ENCODE measurements at regions of chr11 and their contacts with region 1.

Region 1: DNA sequence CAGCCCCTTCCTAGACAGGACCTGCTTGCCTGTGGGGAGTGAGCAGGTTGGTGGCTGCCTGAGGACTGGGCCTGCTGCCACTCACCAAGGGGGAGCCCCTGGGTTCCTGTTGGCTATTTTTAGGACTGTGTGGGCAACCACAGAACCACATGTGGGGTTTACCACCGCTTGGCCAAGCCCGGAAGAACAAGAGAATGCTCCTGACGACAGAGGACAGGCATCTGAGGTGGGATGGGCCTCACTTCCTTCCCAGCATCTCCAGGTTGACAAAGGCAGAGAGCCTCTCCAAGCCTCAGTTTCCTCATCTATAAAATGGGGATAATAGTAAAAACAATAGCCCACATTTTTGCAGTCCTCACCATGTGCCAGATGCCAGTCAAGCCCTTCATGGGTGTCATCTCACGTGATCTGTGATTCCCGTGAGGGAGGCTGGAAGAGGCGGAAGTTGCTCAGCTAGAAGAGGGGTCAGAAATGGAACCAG is 43.6 kb downstream of the LRRC32 start:
- DNase-seq: peak; percentile 91
- H3K4me3 Mint-ChIP-seq: peak overlapping the region; percentile 47
- H3K27ac Mint-ChIP-seq: peak overlapping the region; percentile 88
- H3K4me1 Mint-ChIP-seq: peaks cover 42% of the 10 kb centered on the region
- H3K27me3 Mint-ChIP-seq: no peaks in the 10 kb centered on the region

Region 2: GRCh38 chr11:76670485-76671236 is 43.7 kb after region 1 on chr11 and contains the start of gene LRRC32:
- intact Hi-C with region 1: loop called (anchors 2 kb)
- DNase-seq: peak; percentile 77
- H3K4me3 Mint-ChIP-seq: peak within 1 kb of the TSS; percentile 79
- H3K27ac Mint-ChIP-seq: no peak within 1 kb of the TSS
- H3K4me1 Mint-ChIP-seq: peaks cover 34% of the 10 kb centered on the region
- H3K27me3 Mint-ChIP-seq: peaks cover 28% of the 10 kb centered on the region
- total RNA-seq, gene LRRC32: 6.6 and 8.6 TPM in 2 replicates

Measured in activated CD4-positive, alpha-beta T cell treated with anti-CD3 and anti-CD28 coated beads, Interleukin-2, amount 10 ng/mL, durations not matched to agents 24 days and 14 days (primary cell).